PC-9 (cell line): ENCODE measurements at regions of chr12 and their contacts with region 1.

Region 1: DNA sequence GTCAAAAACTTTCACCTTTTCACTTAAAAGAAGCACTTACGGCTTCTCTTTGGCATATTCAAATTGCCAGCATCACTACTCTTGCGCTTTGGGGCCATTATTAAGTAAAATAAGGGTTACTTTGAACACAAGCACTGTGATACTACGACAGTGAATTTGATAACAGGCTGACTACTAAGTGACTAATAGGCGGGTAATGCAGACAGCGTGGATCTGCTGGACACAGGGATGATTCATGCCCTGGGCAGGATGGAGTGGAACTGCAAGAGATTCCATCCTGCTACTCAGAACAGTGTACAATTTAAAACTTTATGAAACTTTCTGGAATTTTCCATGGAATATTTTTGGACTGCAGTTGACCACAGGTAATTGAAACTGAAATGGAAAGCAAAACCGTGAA is 45.9 kb downstream of the YEATS4 start:
- DNase-seq: peak; percentile 70 to 82
- H3K4me3 ChIP-seq: no peak overlapping the region
- H3K27ac ChIP-seq: peak overlapping the region; percentile 40
- H3K4me1 ChIP-seq: peaks cover 19% of the 10 kb centered on the region
- H3K27me3 ChIP-seq: no peaks in the 10 kb centered on the region
- CTCF ChIP-seq: no peak

Region 2: DNA sequence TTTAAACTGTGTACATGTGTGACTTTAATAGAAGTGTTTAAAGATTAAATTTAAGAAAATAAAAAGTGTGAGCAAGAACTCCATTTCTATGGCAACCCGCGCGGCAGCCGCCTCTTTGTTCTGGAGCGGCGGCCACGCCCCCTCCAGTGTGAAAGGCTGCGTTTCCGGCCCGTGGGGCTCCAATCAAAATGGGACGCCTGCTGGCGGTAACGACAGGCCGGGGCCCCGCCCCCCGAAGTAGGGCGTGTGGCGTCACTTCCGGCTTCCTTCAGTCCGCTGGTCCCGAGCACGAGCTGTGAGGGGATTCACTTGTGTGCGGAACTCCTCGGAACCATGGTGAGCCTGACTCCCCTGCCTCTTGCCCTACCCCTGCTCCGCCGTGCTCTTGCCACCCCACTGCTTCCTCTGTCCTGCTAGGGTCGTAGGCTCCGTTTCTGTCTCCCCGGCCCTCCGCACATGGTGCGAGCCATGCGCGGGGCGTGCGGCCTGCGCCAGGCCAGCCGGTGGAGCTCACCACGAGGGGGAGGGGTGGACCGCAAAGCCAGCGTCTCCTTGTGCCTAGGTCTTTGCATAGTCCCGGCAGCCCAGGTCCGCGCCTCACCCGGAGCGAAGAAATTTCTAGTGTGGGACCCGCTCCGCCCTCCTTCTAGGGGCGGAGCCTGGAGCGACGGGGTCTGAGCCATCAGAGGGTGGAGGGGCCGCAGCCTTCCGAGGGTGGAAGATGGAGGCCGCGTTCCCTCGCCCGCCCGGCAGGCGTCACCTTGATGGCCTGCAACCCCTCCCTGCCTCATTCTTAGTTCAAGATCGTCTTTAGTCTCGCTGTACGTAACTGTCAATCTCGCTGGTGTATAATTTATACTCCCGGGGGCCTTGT is 180.0 kb after region 1 on chr12 and contains the start of gene CCT2:
- CTCF ChIA-PET with region 1: no interaction called
- POLR2A ChIA-PET with region 1: no interaction called
- intact Hi-C with region 1: loop called (anchors 5 kb)
- DNase-seq: peak; percentile 85 to 93
- H3K4me3 ChIP-seq: peak within 1 kb of the TSS; percentile 77
- H3K27ac ChIP-seq: peak within 1 kb of the TSS; percentile 82
- H3K4me1 ChIP-seq: peaks cover 13% of the 10 kb centered on the region; the same call in 1 of the 2 replicates
- H3K27me3 ChIP-seq: no peaks in the 10 kb centered on the region
- CTCF ChIP-seq: no peak; the same call in 1 of the 2 replicates
- total RNA-seq, gene CCT2: 136 and 162 TPM in 2 replicates